Left colon (tissue), 2 donors: ENCODE measurements at regions of chr9 and their contacts with region 1.

Region 1: DNA sequence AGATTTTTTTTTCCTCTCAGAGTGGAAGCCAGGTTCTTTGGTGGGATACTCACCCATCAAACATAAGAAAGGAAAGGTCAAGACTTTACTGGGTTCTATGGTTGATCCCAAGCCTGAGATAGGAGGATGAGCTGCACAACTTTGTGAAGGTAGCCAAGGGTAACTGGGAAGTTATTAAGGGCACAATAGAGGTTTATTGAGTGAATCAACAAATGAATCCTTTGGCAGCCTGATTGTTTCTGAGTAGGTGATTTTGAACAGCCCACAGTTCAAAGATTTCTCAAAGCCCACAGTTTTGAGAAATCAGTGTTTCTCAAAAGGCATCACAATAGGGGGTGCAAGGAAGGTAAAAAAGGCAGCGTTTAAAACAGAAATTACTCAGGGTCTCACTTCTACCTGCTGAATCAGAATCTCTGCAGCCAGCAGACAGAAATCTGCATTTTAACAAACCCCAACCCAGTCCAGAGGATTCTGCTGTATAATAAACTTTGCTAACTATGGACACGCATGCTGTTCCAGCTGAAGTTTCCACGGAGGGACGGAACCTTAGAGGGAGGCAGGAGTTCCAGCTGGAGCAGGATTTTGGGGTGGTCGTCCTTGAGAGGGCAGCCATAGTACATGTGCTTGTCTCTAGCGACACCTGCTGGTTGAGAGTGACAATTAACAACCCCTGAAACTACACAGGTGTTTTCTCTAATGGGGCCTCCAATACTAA is 32.7 kb upstream of the FSD1L start:
- DNase-seq: peak in 1 of 2 donors; percentile 56
- ATAC-seq: peak; percentile 62

Region 2: GRCh38 chr9:104850786-104851545 is 564.1 kb before region 1 on chr9:
- intact Hi-C with region 1: loop called in 1 of 2 experiments (anchors 5 kb)
- DNase-seq: no peak
- ATAC-seq: no peak

Region 3: GRCh38 chr9:104911032-104911607 is 504.0 kb before region 1 on chr9:
- intact Hi-C with region 1: loop called in 1 of 2 experiments (anchors 10 kb)
- DNase-seq: no peak
- ATAC-seq: no peak

Region 4: GRCh38 chr9:105157130-105157583 is 257.9 kb before region 1 on chr9:
- intact Hi-C with region 1: loop called in 1 of 2 experiments (anchors 10 kb)
- DNase-seq: peak; percentile 50 to 81
- ATAC-seq: peak; percentile 85

Region 5: DNA sequence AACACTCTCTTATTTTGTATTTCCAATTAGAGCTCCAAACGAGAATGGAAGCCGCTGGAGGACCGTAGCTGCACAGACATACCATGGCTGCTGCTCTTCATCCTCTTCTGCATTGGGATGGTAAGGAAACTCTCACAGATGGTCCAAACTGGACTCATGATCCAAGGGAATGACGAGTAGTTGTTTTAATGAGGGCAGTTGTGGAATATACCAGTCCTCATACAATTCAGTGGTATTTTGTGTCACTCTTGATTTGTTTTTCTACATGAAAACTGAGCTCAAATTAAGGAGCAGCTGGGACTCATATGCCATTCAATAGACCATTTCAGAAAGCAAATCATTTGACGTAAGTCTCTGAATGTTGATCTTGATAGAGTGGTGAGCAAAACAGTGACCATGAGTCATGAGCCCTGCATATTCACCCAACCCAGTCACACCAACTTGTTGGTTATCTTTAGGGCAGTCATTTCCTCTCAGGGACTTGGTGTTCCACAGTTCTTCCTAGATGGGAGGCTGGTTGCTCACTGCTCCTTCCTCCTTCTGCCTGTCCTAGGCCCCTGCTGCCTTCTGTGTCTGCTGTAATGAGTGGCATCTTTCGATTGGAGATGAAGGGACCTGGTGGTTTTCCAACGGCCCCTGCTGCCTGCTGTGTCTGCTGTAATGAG is 115.8 kb before region 1 on chr9:
- intact Hi-C with region 1: no loop called
- DNase-seq: no peak
- ATAC-seq: peak; percentile 86